ENCODE measurements at regions of chr10 and their contacts with region 1.

Region 1: GRCh38 chr10:93352638-93353383 is 129.3 kb downstream of the MYOF start:
- DNase-seq: peak; percentile 46
- H3K4me3 Mint-ChIP-seq: no peak overlapping the region
- H3K27ac Mint-ChIP-seq: no peak overlapping the region
- H3K4me1 Mint-ChIP-seq: no peaks in the 10 kb centered on the region
- H3K27me3 Mint-ChIP-seq: no peaks in the 10 kb centered on the region
- CTCF ChIP-seq: peak; percentile 51

Region 2: GRCh38 chr10:92886334-92886961 is 466.4 kb before region 1 on chr10:
- CTCF ChIA-PET with region 1: interaction called, 6 read pairs
- POLR2A ChIA-PET with region 1: no interaction called
- intact Hi-C with region 1: loop called (anchors 5 kb)
- DNase-seq: peak; percentile 2
- H3K4me3 Mint-ChIP-seq: no peak overlapping the region
- H3K27ac Mint-ChIP-seq: no peak overlapping the region
- H3K4me1 Mint-ChIP-seq: peaks cover 5% of the 10 kb centered on the region
- H3K27me3 Mint-ChIP-seq: no peaks in the 10 kb centered on the region
- CTCF ChIP-seq: no peak

Region 3: DNA sequence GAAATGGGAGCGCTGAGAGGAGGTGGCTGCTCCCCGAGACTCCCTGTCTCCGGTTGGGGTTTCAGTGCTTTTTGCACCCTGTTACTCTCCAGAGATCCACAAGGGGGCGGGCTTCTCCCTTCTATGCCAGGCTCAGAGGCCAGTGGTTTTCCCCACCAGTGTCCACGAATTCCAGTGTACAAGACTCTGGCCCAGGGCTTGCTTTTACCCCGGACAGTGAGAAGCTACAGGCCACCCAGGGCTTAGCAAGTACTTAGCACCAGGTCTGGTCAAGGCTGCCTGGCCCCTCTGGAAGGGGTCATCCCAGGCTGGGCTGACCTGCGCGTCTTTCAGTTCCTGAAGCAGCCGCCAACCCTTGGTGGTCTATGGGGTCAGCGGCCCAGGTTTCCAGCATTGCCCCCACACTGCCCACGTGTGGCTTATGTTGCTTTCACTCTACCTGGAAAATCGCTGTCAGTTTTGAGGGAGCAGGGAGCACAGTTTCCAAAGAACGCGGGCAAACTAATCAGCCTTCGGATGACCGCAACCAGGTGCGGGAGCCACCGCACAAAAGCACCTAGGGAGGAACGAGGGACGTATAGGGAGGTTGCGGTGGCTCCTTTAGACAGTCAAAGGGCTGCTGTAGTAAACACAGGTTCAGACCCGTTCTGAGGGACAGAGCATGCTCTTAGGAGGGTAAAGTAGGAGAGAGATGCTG is 272.3 kb before region 1 on chr10:
- CTCF ChIA-PET with region 1: interaction called, 8 read pairs
- POLR2A ChIA-PET with region 1: no interaction called
- intact Hi-C with region 1: loop called (anchors 2 kb)
- DNase-seq: peak; percentile 57
- H3K4me3 Mint-ChIP-seq: peak overlapping the region; percentile 29
- H3K27ac Mint-ChIP-seq: peak overlapping the region; percentile 72
- H3K4me1 Mint-ChIP-seq: peaks cover 5% of the 10 kb centered on the region
- H3K27me3 Mint-ChIP-seq: peaks cover 17% of the 10 kb centered on the region
- CTCF ChIP-seq: peak; percentile 86

Region 4: DNA sequence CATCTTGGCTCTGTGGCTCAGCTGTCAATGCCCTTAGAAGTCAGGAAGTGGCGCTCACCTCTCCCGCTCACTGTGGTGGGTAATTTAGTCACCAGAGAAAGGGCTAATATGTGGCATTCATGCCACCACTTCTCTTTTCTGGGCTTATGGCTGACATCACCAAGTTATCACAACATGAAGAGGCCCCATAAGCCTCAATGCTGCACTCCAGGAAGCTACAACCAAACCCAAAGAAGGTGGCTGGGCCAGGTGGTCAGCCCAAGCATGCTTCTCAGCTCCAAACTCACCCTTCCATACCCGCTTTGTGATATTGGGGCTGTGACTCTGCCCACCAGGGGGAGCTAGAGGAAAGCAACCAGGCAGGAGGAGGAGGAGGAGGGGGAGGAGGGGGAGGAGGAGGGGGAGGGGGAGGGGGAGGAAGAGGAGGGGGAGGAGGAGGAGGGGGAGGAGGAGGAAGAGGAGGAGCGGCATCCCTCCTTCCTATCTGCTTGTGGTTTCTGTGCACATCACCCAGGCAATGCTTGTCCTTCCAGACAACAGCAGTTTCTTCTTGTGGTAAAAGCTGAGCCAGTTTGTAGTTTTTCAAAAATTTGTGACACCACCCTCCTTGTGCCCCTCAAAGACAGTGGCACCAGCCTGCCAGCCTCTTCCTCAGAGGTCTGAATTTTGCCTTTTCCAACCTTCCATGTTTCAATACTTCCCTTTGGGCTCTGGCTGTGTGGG is 237.0 kb before region 1 on chr10:
- CTCF ChIA-PET with region 1: interaction called, 3 read pairs
- POLR2A ChIA-PET with region 1: no interaction called
- intact Hi-C with region 1: loop called (anchors 2 kb)
- DNase-seq: peak; percentile 82
- H3K4me3 Mint-ChIP-seq: no peak overlapping the region
- H3K27ac Mint-ChIP-seq: no peak overlapping the region
- H3K4me1 Mint-ChIP-seq: no peaks in the 10 kb centered on the region
- H3K27me3 Mint-ChIP-seq: no peaks in the 10 kb centered on the region
- CTCF ChIP-seq: peak; percentile 43

Region 5: GRCh38 chr10:93235686-93236085 is 117.1 kb before region 1 on chr10:
- CTCF ChIA-PET with region 1: no interaction called
- POLR2A ChIA-PET with region 1: no interaction called
- intact Hi-C with region 1: no loop called
- DNase-seq: peak; percentile 15
- H3K4me3 Mint-ChIP-seq: no peak overlapping the region
- H3K27ac Mint-ChIP-seq: no peak overlapping the region
- H3K4me1 Mint-ChIP-seq: no peaks in the 10 kb centered on the region
- H3K27me3 Mint-ChIP-seq: no peaks in the 10 kb centered on the region
- CTCF ChIP-seq: no peak

Region 6: GRCh38 chr10:93342366-93342765 is 10.4 kb before region 1 on chr10:
- CTCF ChIA-PET with region 1: interaction called, 13 read pairs
- POLR2A ChIA-PET with region 1: interaction called, 4 read pairs
- intact Hi-C with region 1: no loop called
- DNase-seq: no peak
- H3K4me3 Mint-ChIP-seq: no peak overlapping the region
- H3K27ac Mint-ChIP-seq: no peak overlapping the region
- H3K4me1 Mint-ChIP-seq: no peaks in the 10 kb centered on the region
- H3K27me3 Mint-ChIP-seq: no peaks in the 10 kb centered on the region
- CTCF ChIP-seq: no peak

Region 7: DNA sequence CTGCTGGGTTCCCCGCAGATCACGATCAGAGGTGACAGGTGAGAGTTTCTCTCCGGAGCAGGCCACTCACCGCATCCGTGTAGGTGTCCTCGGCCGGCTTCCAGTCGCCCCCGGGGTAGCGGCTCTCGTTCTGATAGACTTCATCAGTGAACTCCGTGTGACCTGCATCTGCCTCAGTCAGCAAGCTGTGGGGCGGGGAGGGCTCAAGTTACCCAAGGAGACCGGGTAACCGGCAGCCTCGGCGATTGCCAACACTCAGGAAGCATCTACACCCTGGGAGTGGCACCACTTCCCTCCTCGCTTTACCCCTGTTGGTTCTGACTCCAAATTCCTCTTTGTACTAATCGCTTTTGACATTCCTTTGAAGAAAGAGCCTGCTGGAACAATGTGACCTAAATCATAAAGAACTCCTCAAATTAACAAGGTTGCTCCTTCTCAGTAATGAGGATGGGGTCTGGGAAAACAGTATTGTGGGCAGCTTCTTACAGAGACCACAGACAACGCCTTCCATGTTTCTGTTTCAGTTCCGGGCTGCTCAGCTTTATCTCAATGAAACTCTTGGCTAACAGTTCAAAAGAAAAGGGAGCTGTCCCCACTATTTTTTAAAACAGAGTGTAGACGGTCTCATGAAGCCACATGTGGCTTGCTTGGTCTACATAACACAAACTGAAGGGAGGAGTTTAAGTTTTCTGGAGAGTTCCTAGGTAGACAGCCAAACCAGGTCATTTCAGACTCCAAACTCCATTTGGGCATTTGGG is 11.3 kb after region 1 on chr10:
- CTCF ChIA-PET with region 1: interaction called, 11 read pairs
- POLR2A ChIA-PET with region 1: interaction called, 3 read pairs
- intact Hi-C with region 1: no loop called
- DNase-seq: no peak
- H3K4me3 Mint-ChIP-seq: no peak overlapping the region
- H3K27ac Mint-ChIP-seq: no peak overlapping the region
- H3K4me1 Mint-ChIP-seq: no peaks in the 10 kb centered on the region
- H3K27me3 Mint-ChIP-seq: no peaks in the 10 kb centered on the region
- CTCF ChIP-seq: no peak

Region 8: DNA sequence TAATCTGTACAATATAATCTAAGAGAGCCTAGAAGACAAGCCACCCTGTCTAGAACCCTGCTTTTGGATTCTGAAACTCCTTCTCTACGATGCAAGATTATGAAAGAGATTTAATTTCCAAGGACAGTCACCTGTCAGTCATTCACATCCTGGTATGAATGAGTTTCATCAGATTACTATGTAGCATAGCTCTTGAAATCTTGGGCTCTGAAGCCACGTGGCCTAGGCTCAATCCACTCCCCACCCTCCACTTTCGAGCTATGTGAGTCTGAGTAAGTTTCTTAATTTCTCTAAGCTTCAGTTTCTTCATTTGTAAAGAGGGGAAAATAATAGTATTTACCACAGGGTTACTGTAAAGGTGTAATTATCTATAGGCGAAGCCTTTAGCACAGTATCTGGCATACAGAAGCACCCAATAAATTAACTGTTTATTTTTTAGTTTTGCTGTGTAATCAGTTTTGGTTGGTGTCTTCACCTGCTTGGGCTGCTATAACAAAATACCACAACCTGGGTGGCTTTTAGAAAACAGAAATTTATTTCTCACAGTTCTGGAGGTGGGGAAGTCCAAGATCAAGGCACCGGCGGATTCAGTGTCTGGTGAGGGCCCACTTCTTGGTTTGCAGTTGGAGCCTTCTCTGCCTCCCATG is 58.0 kb after region 1 on chr10:
- CTCF ChIA-PET with region 1: no interaction called
- POLR2A ChIA-PET with region 1: no interaction called
- intact Hi-C with region 1: no loop called
- DNase-seq: no peak
- H3K4me3 Mint-ChIP-seq: no peak overlapping the region
- H3K27ac Mint-ChIP-seq: peak overlapping the region; percentile 71
- H3K4me1 Mint-ChIP-seq: no peaks in the 10 kb centered on the region
- H3K27me3 Mint-ChIP-seq: no peaks in the 10 kb centered on the region
- CTCF ChIP-seq: no peak

Region 9: GRCh38 chr10:93515071-93516005 is 162.5 kb after region 1 on chr10:
- CTCF ChIA-PET with region 1: interaction called, 13 read pairs
- POLR2A ChIA-PET with region 1: no interaction called
- intact Hi-C with region 1: loop called (anchors 1 kb)
- DNase-seq: no peak
- H3K4me3 Mint-ChIP-seq: no peak overlapping the region
- H3K27ac Mint-ChIP-seq: peak overlapping the region; percentile 1
- H3K4me1 Mint-ChIP-seq: peaks cover 7% of the 10 kb centered on the region
- H3K27me3 Mint-ChIP-seq: no peaks in the 10 kb centered on the region
- CTCF ChIP-seq: no peak

Region 10: GRCh38 chr10:93911866-93912265 is 559.1 kb after region 1 on chr10:
- CTCF ChIA-PET with region 1: no interaction called
- POLR2A ChIA-PET with region 1: no interaction called
- intact Hi-C with region 1: no loop called
- DNase-seq: no peak
- H3K4me3 Mint-ChIP-seq: no peak overlapping the region
- H3K27ac Mint-ChIP-seq: no peak overlapping the region
- H3K4me1 Mint-ChIP-seq: no peaks in the 10 kb centered on the region
- H3K27me3 Mint-ChIP-seq: no peaks in the 10 kb centered on the region
- CTCF ChIP-seq: no peak